GM10248 (cell line): ENCODE measurements at regions of chr17 and their contacts with region 1.

Region 1: DNA sequence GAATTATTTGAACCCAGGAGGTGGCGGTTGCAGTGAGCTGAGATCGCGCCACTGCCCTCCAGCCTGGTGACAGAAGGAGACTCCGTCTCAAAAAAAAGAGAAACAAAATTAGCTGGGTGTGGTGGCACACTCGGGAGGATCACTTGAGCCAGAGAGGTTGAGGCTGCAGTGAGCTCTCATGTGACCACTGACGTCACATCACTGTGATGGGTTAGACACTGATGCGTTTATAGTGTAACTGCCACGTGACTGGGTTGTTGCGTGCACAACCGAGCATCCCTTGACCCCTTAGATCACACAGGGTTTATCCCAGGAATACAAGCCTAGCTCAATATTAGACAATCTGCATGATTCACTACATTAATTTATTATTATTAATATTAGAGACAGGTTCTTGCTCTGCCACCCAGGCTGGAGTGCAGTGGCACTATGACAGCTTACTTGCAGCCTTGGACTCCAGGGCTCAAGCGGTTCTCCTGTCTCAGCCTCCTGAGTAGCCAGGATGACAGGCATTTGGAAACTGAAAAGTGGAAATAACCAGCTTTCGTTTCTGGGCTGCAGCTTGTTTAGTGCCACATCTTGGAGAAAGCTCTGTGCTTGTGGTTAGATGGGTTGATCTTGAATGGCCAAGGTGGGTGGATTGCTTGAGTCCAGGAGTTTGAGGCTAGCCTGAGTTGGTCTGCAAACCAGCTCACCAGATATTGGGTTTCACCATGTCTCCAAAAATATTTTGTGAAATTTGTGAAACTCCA is 26.4 kb upstream of the ABR start:
- DNase-seq: no peak
- CTCF ChIP-seq: no peak

Region 2: GRCh38 chr17:1216217-1217088 is 10.3 kb after region 1 on chr17:
- CTCF ChIA-PET with region 1: interaction called, 18 read pairs
- POLR2A ChIA-PET with region 1: no interaction called
- DNase-seq: peak; percentile 53
- CTCF ChIP-seq: no peak